ENCODE measurements at regions of chr11 and their contacts with region 1.

Region 1: GRCh38 chr11:17498475-17498874 is 21.8 kb upstream of the ABCC8 start:
- DNase-seq: no peak
- H3K4me3 ChIP-seq: no peak overlapping the region
- H3K27ac ChIP-seq: no peak overlapping the region
- H3K4me1 ChIP-seq: no peaks in the 10 kb centered on the region
- H3K27me3 ChIP-seq: no peaks in the 10 kb centered on the region
- CTCF ChIP-seq: no peak

Region 2: GRCh38 chr11:17230867-17231851 is 267.3 kb before region 1 on chr11:
- intact Hi-C with region 1: loop called (anchors 5 kb)
- DNase-seq: no peak
- H3K4me3 ChIP-seq: no peak overlapping the region
- H3K27ac ChIP-seq: no peak overlapping the region
- H3K4me1 ChIP-seq: no peaks in the 10 kb centered on the region
- H3K27me3 ChIP-seq: no peaks in the 10 kb centered on the region
- CTCF ChIP-seq: no peak

Region 3: DNA sequence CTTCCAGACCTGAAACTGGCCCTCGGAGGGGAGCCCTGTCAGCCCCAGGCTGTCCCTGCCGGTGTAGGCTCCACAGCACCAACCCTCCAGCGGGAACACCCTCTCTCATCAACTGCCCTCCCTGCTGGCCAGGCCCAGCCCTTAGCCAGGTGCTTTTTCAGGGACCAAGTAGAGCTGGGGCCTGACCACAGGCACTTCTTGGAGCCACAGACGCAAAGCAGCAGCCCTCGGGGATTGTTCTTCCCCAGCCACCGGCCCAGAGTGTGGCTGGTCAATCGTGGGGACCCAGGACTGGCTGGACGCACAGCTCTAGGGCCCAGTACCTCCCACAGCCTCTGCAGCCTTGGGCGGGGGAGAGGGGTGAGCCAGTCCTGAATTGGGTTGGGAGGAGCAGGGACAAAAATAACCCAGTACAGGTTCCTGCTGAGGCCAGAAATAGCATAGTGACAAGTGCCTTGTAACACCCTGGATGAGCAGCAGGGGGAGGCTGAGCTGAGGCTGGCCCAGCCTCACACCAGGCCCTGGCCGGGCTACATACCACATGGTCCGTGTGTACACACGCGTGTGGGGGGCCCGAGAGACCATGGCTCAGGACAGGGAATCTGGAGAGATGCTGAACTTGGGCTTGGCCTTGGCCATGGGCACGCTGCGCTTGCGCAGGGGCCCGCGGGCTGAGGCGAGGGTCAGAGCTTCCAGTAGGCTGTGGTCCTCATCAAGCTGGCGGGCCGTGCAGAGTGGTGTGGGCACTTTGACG is 112.0 kb before region 1 on chr11:
- intact Hi-C with region 1: loop called (anchors 1 kb)
- DNase-seq: peak; percentile 47 to 87
- H3K4me3 ChIP-seq: peak overlapping the region; percentile 27 to 28
- H3K27ac ChIP-seq: peak overlapping the region; percentile 74 to 75
- H3K4me1 ChIP-seq: peaks cover 0 to 39% (median 16%) of the 10 kb centered on the region in 4 donors
- H3K27me3 ChIP-seq: no peaks in the 10 kb centered on the region
- CTCF ChIP-seq: peak; percentile 72 to 85

Region 4: GRCh38 chr11:19240420-19241259 is 1742.2 kb after region 1 on chr11 and contains the start of gene E2F8:
- intact Hi-C with region 1: loop called (anchors 5 kb)
- DNase-seq: peak; percentile 83 to 91
- H3K4me3 ChIP-seq: peak within 1 kb of the TSS; percentile 48 to 60
- H3K27ac ChIP-seq: no peak within 1 kb of the TSS
- H3K4me1 ChIP-seq: peaks cover 0 to 28% (median 24%) of the 10 kb centered on the region in 4 donors
- H3K27me3 ChIP-seq: peaks cover 8 to 75% of the 10 kb centered on the region in 2 donors
- CTCF ChIP-seq: no peak